Transverse colon (tissue), 4 donors: ENCODE measurements at regions of chr5 and their contacts with region 1.

Region 1: DNA sequence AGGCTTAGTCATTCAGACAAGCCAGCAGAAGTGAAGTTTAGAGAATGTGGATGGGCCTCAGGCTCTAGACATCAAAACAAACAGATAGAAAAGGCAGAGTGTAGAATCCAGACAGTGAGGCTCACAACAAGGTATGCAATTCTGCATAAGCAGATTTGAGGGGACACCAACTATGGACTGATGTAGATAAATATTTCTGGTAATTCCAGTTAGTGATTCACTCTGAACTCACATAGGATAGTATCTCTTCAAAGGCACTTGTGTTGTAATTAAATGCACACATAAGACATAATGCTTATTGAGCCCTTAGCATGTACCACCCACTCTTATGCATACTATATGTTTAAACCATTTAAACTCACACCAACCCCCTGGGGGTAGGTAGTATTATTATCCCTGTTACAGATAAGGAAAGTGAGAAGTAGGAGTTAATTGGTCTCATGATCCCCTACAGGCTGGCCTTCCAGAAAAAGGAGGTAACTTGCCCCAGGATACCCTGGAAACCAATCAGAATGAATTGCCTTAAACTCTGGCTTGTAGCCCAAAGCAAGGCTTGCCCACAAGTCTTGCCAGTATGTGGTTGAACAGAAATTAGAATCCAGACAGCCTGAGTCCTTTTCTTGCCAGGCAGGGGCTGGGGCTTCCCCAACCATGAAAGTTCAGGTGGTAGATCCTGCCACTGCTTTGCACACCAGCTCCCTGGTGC is 39.5 kb upstream of the HSPB3 start:
- DNase-seq: no peak
- H3K4me3 ChIP-seq: no peak overlapping the region
- H3K27ac ChIP-seq: no peak overlapping the region
- H3K4me1 ChIP-seq: no peaks in the 10 kb centered on the region
- H3K27me3 ChIP-seq: no peaks in the 10 kb centered on the region
- CTCF ChIP-seq: no peak
- EP300 ChIP-seq: no peak
- POLR2A ChIP-seq: no peak

Region 2: GRCh38 chr5:54243473-54244080 is 172.5 kb before region 1 on chr5:
- in situ Hi-C with region 1: loop called in 1 of 4 experiments (anchors 10 kb)
- intact Hi-C with region 1: loop called (anchors 10 kb)
- DNase-seq: peak; percentile 28
- H3K4me3 ChIP-seq: no peak overlapping the region
- H3K27ac ChIP-seq: no peak overlapping the region
- H3K4me1 ChIP-seq: no peaks in the 10 kb centered on the region
- H3K27me3 ChIP-seq: no peaks in the 10 kb centered on the region
- CTCF ChIP-seq: peak; percentile 59 to 79 (median 65)
- EP300 ChIP-seq: no peak
- POLR2A ChIP-seq: no peak

Region 3: GRCh38 chr5:54249210-54250028 is 166.6 kb before region 1 on chr5:
- in situ Hi-C with region 1: loop called in 3 of 4 experiments (anchors 10 to 25 kb)
- intact Hi-C with region 1: loop called (anchors 10 kb)
- DNase-seq: peak; percentile 14
- H3K4me3 ChIP-seq: no peak overlapping the region
- H3K27ac ChIP-seq: no peak overlapping the region
- H3K4me1 ChIP-seq: peaks cover 0 to 35% (median 3%) of the 10 kb centered on the region in 4 donors
- H3K27me3 ChIP-seq: no peaks in the 10 kb centered on the region
- CTCF ChIP-seq: peak in 2 of 5 experiments; percentile 16 to 21
- EP300 ChIP-seq: no peak
- POLR2A ChIP-seq: no peak

Region 4: DNA sequence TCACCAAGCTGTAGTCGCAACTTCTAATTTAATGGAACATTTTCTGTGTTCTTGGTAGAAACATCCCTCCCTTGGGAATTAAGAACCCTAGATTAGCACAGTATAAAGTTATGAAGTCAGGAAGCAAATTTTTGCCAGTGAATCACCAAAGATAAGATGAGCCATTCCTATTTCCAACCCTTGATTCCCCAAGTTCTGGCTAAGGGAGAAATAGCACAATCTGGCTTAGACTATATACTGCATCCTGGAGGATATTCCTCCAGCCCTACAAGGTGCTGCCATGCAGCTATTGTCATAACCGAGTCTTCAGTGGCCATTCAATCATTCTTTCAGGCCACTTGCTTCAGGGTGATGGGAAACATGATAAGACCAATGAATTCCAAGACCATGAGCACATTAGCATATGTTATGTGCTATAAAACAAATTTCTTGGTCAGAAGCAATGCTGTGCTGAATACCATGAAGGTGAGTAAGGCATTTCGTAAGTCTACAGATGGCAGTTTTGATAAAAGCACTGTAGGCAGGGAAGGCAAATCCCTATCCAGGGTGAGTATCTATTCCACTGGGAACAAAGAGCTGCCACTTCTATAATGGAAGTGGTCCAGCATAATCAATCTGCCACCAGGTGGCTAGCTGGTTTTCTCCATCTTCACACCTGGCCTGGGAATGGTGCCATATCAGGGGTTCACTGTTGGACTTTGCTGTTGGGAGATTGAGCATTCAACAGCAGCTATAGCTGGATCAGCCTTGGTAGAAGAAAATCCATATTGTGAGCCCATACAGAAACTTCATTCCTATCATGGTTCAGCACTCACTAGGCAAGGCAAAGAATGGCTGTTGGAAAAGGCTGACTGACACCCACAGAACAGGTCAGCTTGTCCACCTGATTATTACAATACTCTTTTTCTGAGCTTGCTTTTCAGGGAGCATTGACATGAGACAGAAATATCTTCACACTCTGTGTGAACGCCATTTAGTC is 86.0 kb before region 1 on chr5:
- in situ Hi-C with region 1: loop called in 1 of 4 experiments (anchors 10 kb)
- intact Hi-C with region 1: no loop called
- DNase-seq: no peak
- H3K4me3 ChIP-seq: no peak overlapping the region
- H3K27ac ChIP-seq: no peak overlapping the region
- H3K4me1 ChIP-seq: no peaks in the 10 kb centered on the region
- H3K27me3 ChIP-seq: no peaks in the 10 kb centered on the region
- CTCF ChIP-seq: no peak
- EP300 ChIP-seq: no peak
- POLR2A ChIP-seq: no peak

Region 5: DNA sequence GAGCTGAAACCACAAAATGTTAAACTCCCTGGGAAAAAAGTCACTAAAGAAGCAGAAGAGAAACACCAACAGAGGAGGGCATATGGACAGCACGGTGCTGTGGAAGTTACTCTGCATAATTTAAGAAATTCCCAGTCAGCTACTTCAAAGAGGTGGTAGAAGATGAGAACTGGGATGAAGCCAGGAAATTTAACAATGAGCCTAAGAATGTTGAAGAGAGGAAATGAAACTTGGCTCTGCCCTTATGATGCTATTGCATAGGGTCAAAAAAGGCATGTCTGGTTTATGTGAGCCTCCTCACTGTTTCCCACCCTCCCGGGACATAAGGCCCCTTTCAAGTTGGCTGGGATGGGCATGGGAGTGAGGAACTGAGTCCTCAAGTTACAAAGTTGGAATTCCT is 76.1 kb after region 1 on chr5:
- in situ Hi-C with region 1: no loop called
- intact Hi-C with region 1: loop called (anchors 10 kb)
- DNase-seq: no peak
- H3K4me3 ChIP-seq: no peak overlapping the region
- H3K27ac ChIP-seq: no peak overlapping the region
- H3K4me1 ChIP-seq: no peaks in the 10 kb centered on the region
- H3K27me3 ChIP-seq: no peaks in the 10 kb centered on the region
- CTCF ChIP-seq: no peak
- EP300 ChIP-seq: no peak
- POLR2A ChIP-seq: no peak